HepG2 (cell line): ENCODE measurements at regions of chr17 and their contacts with region 1.

Region 1: DNA sequence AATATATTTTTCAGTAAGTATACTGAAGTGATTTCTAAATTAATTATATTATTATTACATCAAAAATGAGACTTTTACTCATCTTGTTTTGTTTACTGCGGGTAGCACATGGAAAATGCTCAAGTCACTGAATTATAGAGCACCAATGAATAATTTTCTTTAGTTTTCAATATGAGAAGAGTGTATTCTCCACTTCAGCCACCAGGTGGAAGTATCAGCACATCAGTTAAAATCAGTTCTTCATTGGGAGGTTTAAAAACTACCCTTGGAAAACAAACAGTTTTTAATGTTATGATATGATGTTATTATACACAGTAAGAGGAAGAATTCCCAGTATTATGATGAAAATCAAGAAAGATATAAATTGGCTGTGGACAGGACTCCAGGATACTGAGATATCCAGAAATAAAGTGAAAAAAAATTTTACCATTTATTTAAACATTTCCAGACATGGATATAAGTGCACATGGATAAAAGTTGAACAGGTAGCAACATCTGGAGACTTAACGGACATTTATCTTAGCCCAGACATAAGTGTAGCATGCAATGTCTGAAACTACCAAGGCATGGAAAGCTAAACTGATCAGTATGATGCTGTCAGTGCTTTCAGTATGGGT is 467.3 kb downstream of the KCNJ2 start:
- DNase-seq: peak; percentile 29
- ATAC-seq: no peak
- H3K4me3 ChIP-seq: no peak overlapping the region
- H3K27ac ChIP-seq: no peak overlapping the region
- H3K4me1 ChIP-seq: peaks cover 8% of the 10 kb centered on the region; the same call in 1 of the 2 replicates
- H3K27me3 ChIP-seq: no peaks in the 10 kb centered on the region
- CTCF ChIP-seq: peak; percentile 70
- EP300 ChIP-seq: no peak
- POLR2A ChIP-seq: no peak
- RAD21 ChIP-seq: peak; percentile 45; the same call in 1 of the 2 replicates

Region 2: DNA sequence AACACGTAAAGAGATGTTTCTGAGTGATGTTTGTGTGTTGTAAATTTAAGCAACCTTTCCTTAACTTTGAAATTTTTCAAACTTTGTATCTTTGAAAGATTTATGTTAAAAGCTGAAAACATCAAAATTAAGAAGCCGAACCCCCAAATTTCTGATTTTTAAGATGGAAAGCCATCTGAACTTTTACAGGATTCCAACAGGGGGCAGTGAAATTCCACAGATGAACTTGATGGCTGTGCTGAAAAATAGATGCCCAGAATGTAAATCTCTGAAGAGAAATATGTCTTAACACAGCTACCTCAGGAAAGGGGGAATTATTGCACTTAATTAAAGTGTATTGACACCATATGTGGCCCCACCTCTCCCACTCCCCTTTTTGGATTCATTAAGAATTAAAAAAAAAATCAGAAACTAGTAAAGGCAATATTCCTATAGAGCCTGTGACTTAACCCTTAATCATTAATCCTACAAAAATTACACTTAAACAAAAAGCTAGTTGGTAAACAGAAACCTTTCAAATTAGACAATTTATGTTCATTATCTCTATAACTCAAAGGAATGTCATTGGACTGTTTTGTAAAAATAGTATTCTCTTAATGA is 130.6 kb after region 1 on chr17:
- CTCF ChIA-PET with region 1: no interaction called
- POLR2A ChIA-PET with region 1: no interaction called
- in situ Hi-C with region 1: no loop called
- intact Hi-C with region 1: loop called (anchors 5 kb)
- DNase-seq: peak; percentile 31
- ATAC-seq: no peak
- H3K4me3 ChIP-seq: no peak overlapping the region
- H3K27ac ChIP-seq: no peak overlapping the region
- H3K4me1 ChIP-seq: no peaks in the 10 kb centered on the region
- H3K27me3 ChIP-seq: no peaks in the 10 kb centered on the region
- CTCF ChIP-seq: peak; percentile 61
- EP300 ChIP-seq: no peak
- POLR2A ChIP-seq: no peak
- RAD21 ChIP-seq: 0 out of 2 replicates have a peak, but pooled peaks have one; percentile 24

Region 3: DNA sequence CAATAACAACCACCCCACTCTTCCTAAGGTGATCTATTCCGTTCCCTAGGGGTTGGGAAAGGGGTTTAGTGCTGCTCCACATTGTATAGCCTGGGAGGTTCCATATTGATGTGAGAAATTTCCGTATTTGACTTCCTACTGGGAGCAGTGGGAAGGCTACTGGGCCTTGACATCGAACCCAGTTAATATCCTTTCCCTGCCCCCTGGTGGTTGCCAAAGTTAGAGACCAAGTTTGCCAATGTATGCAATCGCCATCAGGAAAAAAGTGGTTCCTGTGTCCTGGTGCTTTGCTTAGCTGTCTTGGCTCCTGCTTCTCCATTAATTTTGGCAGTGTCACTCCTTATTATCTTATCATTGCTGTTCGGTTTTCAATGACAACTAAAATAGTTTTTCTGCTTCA is 447.6 kb after region 1 on chr17:
- CTCF ChIA-PET with region 1: interaction called, 18 read pairs
- POLR2A ChIA-PET with region 1: no interaction called
- in situ Hi-C with region 1: no loop called
- intact Hi-C with region 1: no loop called
- DNase-seq: peak; percentile 26
- ATAC-seq: peak; percentile 78
- H3K4me3 ChIP-seq: no peak overlapping the region
- H3K27ac ChIP-seq: no peak overlapping the region
- H3K4me1 ChIP-seq: no peaks in the 10 kb centered on the region
- H3K27me3 ChIP-seq: no peaks in the 10 kb centered on the region
- CTCF ChIP-seq: peak; percentile 66
- EP300 ChIP-seq: no peak
- POLR2A ChIP-seq: no peak
- RAD21 ChIP-seq: peak; percentile 35; the same call in 1 of the 2 replicates

Region 4: GRCh38 chr17:71460943-71461342 is 824.3 kb after region 1 on chr17:
- CTCF ChIA-PET with region 1: interaction called, 9 read pairs
- POLR2A ChIA-PET with region 1: no interaction called
- in situ Hi-C with region 1: loop called (anchors 25 kb)
- intact Hi-C with region 1: loop called (anchors 5 kb)
- DNase-seq: no peak
- ATAC-seq: no peak
- H3K4me3 ChIP-seq: no peak overlapping the region
- H3K27ac ChIP-seq: no peak overlapping the region
- H3K4me1 ChIP-seq: no peaks in the 10 kb centered on the region
- H3K27me3 ChIP-seq: peaks cover 0 to 4% of the 10 kb centered on the region in 2 experiments; a peak in 1 of 5 replicates
- CTCF ChIP-seq: no peak
- EP300 ChIP-seq: no peak
- POLR2A ChIP-seq: no peak
- RAD21 ChIP-seq: no peak

Region 5: DNA sequence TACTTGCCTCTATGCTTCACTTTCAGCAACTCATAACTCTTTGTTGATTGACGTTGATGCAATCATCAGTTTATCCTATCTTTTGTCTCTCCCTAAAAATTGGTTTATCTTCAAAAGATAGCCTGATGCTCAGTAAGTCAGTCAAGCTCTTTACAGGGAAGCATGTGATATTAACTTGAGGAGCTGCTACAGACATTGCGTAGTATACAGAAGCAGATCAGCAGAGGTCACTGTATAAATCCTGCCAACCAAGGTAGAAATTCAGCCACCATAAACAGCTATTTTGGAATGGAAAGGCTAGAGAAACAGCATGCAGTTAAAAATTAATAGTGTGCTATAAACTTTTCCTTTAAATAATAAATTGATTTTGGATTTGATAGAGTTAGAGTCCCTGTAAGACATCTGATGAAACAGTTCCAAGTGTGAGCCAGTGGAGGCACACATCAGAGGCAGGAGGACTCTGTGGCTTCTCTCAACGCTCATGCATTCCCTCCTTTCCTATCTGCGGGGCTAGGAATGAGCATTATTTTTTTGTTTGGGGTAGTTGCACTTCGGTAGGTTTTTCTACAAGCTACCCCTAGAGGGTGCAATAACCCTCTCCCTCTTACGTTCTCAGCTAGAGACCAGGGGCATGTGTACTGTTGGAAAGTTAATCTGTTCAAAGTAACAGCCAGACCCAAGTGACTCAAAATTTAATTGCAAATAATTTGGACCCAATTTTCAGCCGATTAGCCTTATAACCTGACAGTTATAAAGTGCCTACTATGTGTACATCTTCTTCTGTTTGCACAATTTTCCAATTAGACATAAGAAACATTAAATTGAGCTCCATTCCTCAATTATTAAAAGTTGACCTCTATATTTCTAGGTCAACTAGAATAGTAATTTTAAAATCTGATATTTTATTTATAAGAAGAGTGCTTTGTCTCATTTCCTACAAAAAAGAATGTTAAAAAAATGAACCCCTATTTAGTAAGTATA is 836.5 kb after region 1 on chr17:
- CTCF ChIA-PET with region 1: no interaction called
- POLR2A ChIA-PET with region 1: no interaction called
- in situ Hi-C with region 1: loop called (anchors 25 kb)
- intact Hi-C with region 1: no loop called
- DNase-seq: peak; percentile 65
- ATAC-seq: peak; percentile 93
- H3K4me3 ChIP-seq: no peak overlapping the region
- H3K27ac ChIP-seq: no peak overlapping the region
- H3K4me1 ChIP-seq: no peaks in the 10 kb centered on the region
- H3K27me3 ChIP-seq: no peaks in the 10 kb centered on the region
- CTCF ChIP-seq: peak; percentile 80
- EP300 ChIP-seq: no peak
- POLR2A ChIP-seq: no peak
- RAD21 ChIP-seq: peak; percentile 80